ENCODE measurements at regions of chr6 and their contacts with region 1.

Region 1: GRCh38 chr6:90080876-90081481 is 186.7 kb downstream of the GJA10 start:
- DNase-seq: no peak
- ATAC-seq: peak; percentile 61
- H3K4me3 Mint-ChIP-seq: peak overlapping the region; percentile 84
- H3K27ac Mint-ChIP-seq: peak overlapping the region; percentile 86
- H3K4me1 Mint-ChIP-seq: peaks cover 96% of the 10 kb centered on the region
- H3K27me3 Mint-ChIP-seq: no peaks in the 10 kb centered on the region
- CTCF ChIP-seq: no peak

Region 2: DNA sequence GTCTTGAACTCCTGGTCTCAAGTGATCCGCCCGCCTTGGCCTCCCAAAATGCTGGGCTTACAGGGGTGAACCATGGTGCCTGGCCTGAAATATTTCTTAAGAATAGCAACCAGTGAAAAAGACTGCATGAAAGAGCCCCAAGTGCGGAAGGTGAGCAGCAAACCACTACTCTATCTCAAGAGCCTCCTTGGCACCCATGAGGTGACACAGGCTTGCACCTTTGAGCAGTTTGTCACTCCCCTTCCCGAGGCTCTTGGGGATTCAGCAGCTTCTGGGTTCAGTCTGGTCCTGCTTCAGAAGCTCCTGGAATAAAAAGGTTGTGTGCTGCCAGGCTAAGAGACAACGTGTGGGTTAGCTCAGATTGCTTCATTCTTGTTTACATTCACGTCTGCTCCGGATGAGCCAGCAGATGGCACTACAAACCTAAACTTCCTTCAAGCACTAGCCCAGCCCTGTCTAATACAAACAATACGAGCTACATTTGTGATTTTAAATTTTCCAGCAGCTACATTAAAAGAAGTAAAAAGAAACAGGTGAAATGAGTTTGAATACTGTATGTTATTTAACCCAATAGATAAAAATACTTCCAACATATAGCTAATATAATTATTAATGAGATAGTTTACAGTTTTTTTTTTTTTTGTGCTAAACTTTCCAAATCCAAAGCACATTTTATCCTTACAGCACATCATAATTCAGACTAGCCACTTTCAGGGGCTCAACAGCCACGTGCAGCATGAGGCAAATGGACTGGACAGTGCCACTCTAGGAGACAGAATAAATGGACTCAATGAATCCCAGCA is 140.6 kb before region 1 on chr6:
- CTCF ChIA-PET with region 1: interaction called, 3 read pairs
- POLR2A ChIA-PET with region 1: interaction called, 4 read pairs
- intact Hi-C with region 1: loop called (anchors 10 kb)
- DNase-seq: no peak
- ATAC-seq: peak; percentile 89
- H3K4me3 Mint-ChIP-seq: no peak overlapping the region
- H3K27ac Mint-ChIP-seq: peak overlapping the region; percentile 59
- H3K4me1 Mint-ChIP-seq: peaks cover 13% of the 10 kb centered on the region
- H3K27me3 Mint-ChIP-seq: no peaks in the 10 kb centered on the region
- CTCF ChIP-seq: peak; percentile 58

Region 3: DNA sequence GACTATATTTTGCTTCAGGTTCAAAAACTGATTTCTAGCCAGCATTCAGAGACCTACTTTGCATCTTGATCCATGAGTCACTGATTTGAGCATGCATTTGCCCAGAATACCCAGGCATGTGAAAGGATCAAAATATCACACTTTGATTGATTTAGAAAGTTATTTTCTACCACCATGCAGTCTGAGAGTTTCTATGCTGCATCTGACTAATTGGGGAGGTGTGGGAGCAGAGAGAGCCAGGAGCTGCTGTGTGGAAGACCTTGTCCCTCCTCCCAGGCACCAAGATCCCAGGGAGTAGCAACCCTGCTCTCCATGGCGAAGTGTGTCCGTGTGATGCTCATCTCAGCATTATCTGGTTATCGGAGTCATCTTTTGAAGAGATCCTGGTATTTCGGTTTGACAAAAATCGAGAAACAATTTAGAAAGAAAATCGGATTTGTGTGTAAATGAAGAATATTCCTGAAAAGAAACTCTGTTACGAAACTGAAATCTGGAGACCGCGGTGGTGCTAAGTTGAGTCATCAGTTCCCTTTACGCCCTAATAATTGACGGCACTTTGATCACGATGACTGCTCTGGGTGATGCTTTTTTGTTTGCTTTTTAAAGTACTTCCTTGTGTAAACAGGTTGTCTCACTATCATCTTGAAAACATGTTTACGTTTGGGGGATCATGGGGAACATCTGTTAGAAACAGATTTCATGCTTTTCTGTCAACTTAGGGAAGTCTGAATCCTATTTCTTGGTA is 22.2 kb after region 1 on chr6:
- CTCF ChIA-PET with region 1: interaction called, 3 read pairs
- POLR2A ChIA-PET with region 1: interaction called, 11 read pairs
- intact Hi-C with region 1: loop called (anchors 1 kb)
- DNase-seq: no peak
- ATAC-seq: peak; percentile 47
- H3K4me3 Mint-ChIP-seq: peak overlapping the region; percentile 78
- H3K27ac Mint-ChIP-seq: peak overlapping the region; percentile 74
- H3K4me1 Mint-ChIP-seq: peaks cover 97% of the 10 kb centered on the region
- H3K27me3 Mint-ChIP-seq: no peaks in the 10 kb centered on the region
- CTCF ChIP-seq: no peak

Region 4: GRCh38 chr6:90184334-90185298 is 103.6 kb after region 1 on chr6:
- CTCF ChIA-PET with region 1: interaction called, 14 read pairs
- POLR2A ChIA-PET with region 1: interaction called, 5 read pairs
- intact Hi-C with region 1: loop called (anchors 1 kb)
- DNase-seq: no peak
- ATAC-seq: peak; percentile 26
- H3K4me3 Mint-ChIP-seq: peak overlapping the region; percentile 69
- H3K27ac Mint-ChIP-seq: peak overlapping the region; percentile 89
- H3K4me1 Mint-ChIP-seq: peaks cover 70% of the 10 kb centered on the region
- H3K27me3 Mint-ChIP-seq: no peaks in the 10 kb centered on the region
- CTCF ChIP-seq: no peak

Region 5: GRCh38 chr6:90350689-90351554 is 269.9 kb after region 1 on chr6:
- CTCF ChIA-PET with region 1: no interaction called
- POLR2A ChIA-PET with region 1: no interaction called
- intact Hi-C with region 1: no loop called
- DNase-seq: peak; percentile 20
- ATAC-seq: peak; percentile 95
- H3K4me3 Mint-ChIP-seq: peak overlapping the region; percentile 33
- H3K27ac Mint-ChIP-seq: peak overlapping the region; percentile 95
- H3K4me1 Mint-ChIP-seq: peaks cover 40% of the 10 kb centered on the region
- H3K27me3 Mint-ChIP-seq: no peaks in the 10 kb centered on the region
- CTCF ChIP-seq: no peak

Region 6: GRCh38 chr6:90393232-90393884 is 312.4 kb after region 1 on chr6:
- CTCF ChIA-PET with region 1: no interaction called
- POLR2A ChIA-PET with region 1: no interaction called
- intact Hi-C with region 1: loop called (anchors 5 kb)
- DNase-seq: peak; percentile 47
- ATAC-seq: peak; percentile 53
- H3K4me3 Mint-ChIP-seq: peak overlapping the region; percentile 28
- H3K27ac Mint-ChIP-seq: peak overlapping the region; percentile 59
- H3K4me1 Mint-ChIP-seq: peaks cover 45% of the 10 kb centered on the region
- H3K27me3 Mint-ChIP-seq: no peaks in the 10 kb centered on the region
- CTCF ChIP-seq: peak; percentile 67

Measured in activated B cell treated with CpG ODN at 0.5 μM for 24 hours (primary cell).